Mammary epithelial cell (primary cell): ENCODE measurements at regions of chr11 and their contacts with region 1.

Region 1: GRCh38 chr11:72189461-72190275 is 2.3 kb upstream of the FOLR1 start:
- DNase-seq: no peak
- H3K4me3 ChIP-seq: no peak overlapping the region
- H3K27ac ChIP-seq: no peak overlapping the region
- H3K4me1 ChIP-seq: peaks cover 10% of the 10 kb centered on the region
- H3K27me3 ChIP-seq: no peaks in the 10 kb centered on the region
- CTCF ChIP-seq: no peak

Region 2: GRCh38 chr11:72012897-72013721 is 176.6 kb before region 1 on chr11:
- CTCF ChIA-PET with region 1: no interaction called
- dilution Hi-C with region 1: loop called (anchors 5 kb)
- in situ Hi-C with region 1: no loop called
- intact Hi-C with region 1: no loop called
- DNase-seq: peak; percentile 76
- H3K4me3 ChIP-seq: no peak overlapping the region
- H3K27ac ChIP-seq: no peak overlapping the region
- H3K4me1 ChIP-seq: peaks cover 20% of the 10 kb centered on the region
- H3K27me3 ChIP-seq: no peaks in the 10 kb centered on the region
- CTCF ChIP-seq: peak in 1 of 2 donors; percentile 20

Region 3: GRCh38 chr11:72024069-72024754 is 165.5 kb before region 1 on chr11:
- CTCF ChIA-PET with region 1: interaction called, 7 read pairs
- dilution Hi-C with region 1: no loop called
- in situ Hi-C with region 1: loop called (anchors 5 kb)
- intact Hi-C with region 1: no loop called
- DNase-seq: no peak
- H3K4me3 ChIP-seq: no peak overlapping the region
- H3K27ac ChIP-seq: no peak overlapping the region
- H3K4me1 ChIP-seq: peaks cover 14% of the 10 kb centered on the region
- H3K27me3 ChIP-seq: no peaks in the 10 kb centered on the region
- CTCF ChIP-seq: no peak

Region 4: DNA sequence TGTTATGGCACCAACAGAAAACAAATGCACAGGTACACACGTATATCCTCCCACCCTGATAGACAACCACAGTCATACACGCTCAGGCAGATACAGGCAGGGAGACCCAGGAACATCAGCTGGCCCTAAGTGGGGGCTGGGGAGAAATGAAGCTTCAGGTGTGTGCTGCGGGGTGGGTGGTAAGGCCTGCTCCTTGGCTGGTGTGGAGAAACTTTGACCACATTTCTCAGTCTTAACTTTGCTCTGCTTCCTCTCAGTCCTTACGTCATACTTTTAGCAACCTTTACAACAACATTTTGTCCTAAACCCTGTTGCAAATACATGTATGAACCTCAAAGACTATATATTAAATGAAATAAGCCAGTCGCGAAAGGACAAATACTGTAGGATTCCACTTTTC is 70.5 kb before region 1 on chr11:
- CTCF ChIA-PET with region 1: no interaction called
- dilution Hi-C with region 1: loop called (anchors 5 kb)
- in situ Hi-C with region 1: no loop called
- intact Hi-C with region 1: no loop called
- DNase-seq: no peak
- H3K4me3 ChIP-seq: no peak overlapping the region
- H3K27ac ChIP-seq: no peak overlapping the region
- H3K4me1 ChIP-seq: peaks cover 16% of the 10 kb centered on the region
- H3K27me3 ChIP-seq: no peaks in the 10 kb centered on the region
- CTCF ChIP-seq: no peak

Region 5: DNA sequence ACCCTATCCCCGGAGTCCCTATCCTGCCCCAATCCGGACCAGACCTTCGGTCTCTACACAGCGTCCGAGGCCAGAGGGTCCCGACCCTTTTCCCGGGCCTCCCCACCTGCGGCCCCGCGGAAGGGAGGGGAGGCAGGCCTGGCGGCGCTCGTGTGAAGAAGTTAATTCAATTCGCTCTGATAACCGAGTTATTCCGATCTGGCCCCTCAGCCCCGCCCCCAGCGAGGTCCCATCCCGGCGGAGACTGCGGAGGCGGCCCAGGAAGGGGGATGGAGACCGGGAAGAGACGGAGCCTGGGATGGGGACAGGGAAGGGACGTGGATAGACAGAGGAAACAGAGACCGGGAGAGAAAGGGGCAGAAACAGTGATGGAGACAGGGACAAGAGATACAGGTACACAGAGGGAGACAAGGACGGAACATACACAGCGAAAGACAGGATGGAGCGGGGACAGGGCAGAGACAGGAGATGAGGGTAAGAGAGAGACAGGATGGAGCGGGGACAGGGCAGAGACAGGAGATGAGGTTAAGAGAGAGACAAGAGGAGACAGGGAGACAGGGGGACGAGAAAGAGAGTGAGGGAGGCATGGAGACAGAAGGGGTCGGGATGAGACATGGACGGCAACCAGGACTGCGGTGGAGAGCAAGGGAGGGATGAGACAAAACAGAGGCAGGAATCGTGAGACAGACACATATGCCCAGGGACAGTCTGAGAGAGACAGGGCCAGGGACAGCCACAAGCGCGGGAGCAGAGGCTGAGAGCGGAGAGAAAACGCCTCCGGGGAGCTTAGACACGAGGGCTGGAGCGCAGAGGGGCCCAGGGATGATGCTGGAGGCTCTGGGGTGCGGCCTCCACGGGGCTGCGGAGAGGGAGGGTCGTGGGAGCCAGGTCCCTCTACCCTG is 54.9 kb after region 1 on chr11:
- CTCF ChIA-PET with region 1: no interaction called
- dilution Hi-C with region 1: loop called (anchors 5 kb)
- in situ Hi-C with region 1: no loop called
- intact Hi-C with region 1: no loop called
- DNase-seq: no peak
- H3K4me3 ChIP-seq: no peak overlapping the region
- H3K27ac ChIP-seq: no peak overlapping the region
- H3K4me1 ChIP-seq: peaks cover 6% of the 10 kb centered on the region
- H3K27me3 ChIP-seq: peaks cover 14% of the 10 kb centered on the region
- CTCF ChIP-seq: no peak

Region 6: GRCh38 chr11:72263361-72263760 is 73.7 kb after region 1 on chr11:
- CTCF ChIA-PET with region 1: no interaction called
- dilution Hi-C with region 1: no loop called
- in situ Hi-C with region 1: no loop called
- intact Hi-C with region 1: no loop called
- DNase-seq: peak; percentile 63
- H3K4me3 ChIP-seq: no peak overlapping the region
- H3K27ac ChIP-seq: no peak overlapping the region
- H3K4me1 ChIP-seq: no peaks in the 10 kb centered on the region
- H3K27me3 ChIP-seq: peaks cover 3% of the 10 kb centered on the region
- CTCF ChIP-seq: no peak

Region 7: DNA sequence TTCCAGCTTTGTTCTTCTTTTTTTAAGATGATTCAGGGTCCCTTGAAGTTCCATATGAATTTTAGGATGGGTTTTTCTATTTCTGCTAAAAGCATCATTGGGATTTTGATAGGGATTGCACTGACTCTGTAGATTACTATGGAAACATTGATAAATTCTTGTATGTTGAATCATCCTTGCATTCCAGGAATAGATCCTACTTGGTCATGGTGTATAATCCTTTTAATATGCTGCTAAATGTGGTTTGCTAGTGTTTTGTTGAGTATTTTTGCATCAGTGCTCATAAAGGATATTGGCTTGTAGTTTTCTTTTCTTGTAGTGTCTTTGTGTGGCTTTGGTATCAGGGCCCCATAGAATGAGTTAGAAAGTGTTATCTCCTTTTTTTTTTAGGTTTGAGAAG is 89.2 kb after region 1 on chr11:
- CTCF ChIA-PET with region 1: no interaction called
- dilution Hi-C with region 1: loop called (anchors 10 kb)
- in situ Hi-C with region 1: no loop called
- intact Hi-C with region 1: no loop called
- DNase-seq: peak; percentile 14
- H3K4me3 ChIP-seq: no peak overlapping the region
- H3K27ac ChIP-seq: no peak overlapping the region
- H3K4me1 ChIP-seq: no peaks in the 10 kb centered on the region
- H3K27me3 ChIP-seq: no peaks in the 10 kb centered on the region
- CTCF ChIP-seq: no peak